ENCODE measurements at regions of chr5 and their contacts with region 1.

Region 1: GRCh38 chr5:157858527-157859226 is at the start of gene CLINT1:
- DNase-seq: peak; percentile 78 to 86 (median 84)
- ATAC-seq: peak; percentile 96
- H3K4me3 ChIP-seq: peak within 1 kb of the TSS; percentile 96
- H3K4me3 Mint-ChIP-seq: peak within 1 kb of the TSS; percentile 88 to 99 (median 96)
- H3K27ac ChIP-seq: peak within 1 kb of the TSS; percentile 85
- H3K27ac Mint-ChIP-seq: peak within 1 kb of the TSS; percentile 94 to 99 (median 96)
- H3K4me1 ChIP-seq: peaks cover 7 to 13% of the 10 kb centered on the region in 2 donors
- H3K4me1 Mint-ChIP-seq: peaks cover 51 to 83% (median 78%) of the 10 kb centered on the region in 7 donors
- H3K27me3 ChIP-seq: no peaks in the 10 kb centered on the region
- H3K27me3 Mint-ChIP-seq: no peaks in the 10 kb centered on the region
- total RNA-seq, gene CLINT1: 58.8 to 94.2 (median 74.0) TPM

Region 2: GRCh38 chr5:157540707-157541446 is 317.8 kb before region 1 on chr5:
- CTCF ChIA-PET with region 1: no interaction called
- POLR2A ChIA-PET with region 1: no interaction called
- intact Hi-C with region 1: loop called in 1 of 2 experiments (anchors 1 kb)
- DNase-seq: peak in 1 of 9 donors; percentile 57
- ATAC-seq: peak; percentile 51
- H3K4me3 ChIP-seq: peak overlapping the region; percentile 19
- H3K4me3 Mint-ChIP-seq: peak overlapping the region in 5 of 10 donors; percentile 7 to 81 (median 12)
- H3K27ac ChIP-seq: no peak overlapping the region
- H3K27ac Mint-ChIP-seq: peak overlapping the region in 7 of 9 donors; percentile 2 to 99 (median 45)
- H3K4me1 ChIP-seq: peaks cover 14 to 65% of the 10 kb centered on the region in 2 donors
- H3K4me1 Mint-ChIP-seq: peaks cover 12 to 92% (median 29%) of the 10 kb centered on the region in 7 donors
- H3K27me3 ChIP-seq: no peaks in the 10 kb centered on the region
- H3K27me3 Mint-ChIP-seq: no peaks in the 10 kb centered on the region

Region 3: GRCh38 chr5:157731272-157732129 is 127.2 kb before region 1 on chr5 and contains the start of gene THG1L:
- CTCF ChIA-PET with region 1: no interaction called
- POLR2A ChIA-PET with region 1: no interaction called
- intact Hi-C with region 1: loop called (anchors 1 kb)
- DNase-seq: peak; percentile 94 to 98 (median 96)
- ATAC-seq: peak; percentile 98
- H3K4me3 ChIP-seq: peak within 1 kb of the TSS; percentile 73
- H3K4me3 Mint-ChIP-seq: peak within 1 kb of the TSS; percentile 87 to 99 (median 97)
- H3K27ac ChIP-seq: peak within 1 kb of the TSS; percentile 73
- H3K27ac Mint-ChIP-seq: peak within 1 kb of the TSS; percentile 80 to 98 (median 93)
- H3K4me1 ChIP-seq: peaks cover 3 to 7% of the 10 kb centered on the region in 2 donors
- H3K4me1 Mint-ChIP-seq: peaks cover 9 to 26% (median 23%) of the 10 kb centered on the region in 7 donors
- H3K27me3 ChIP-seq: no peaks in the 10 kb centered on the region
- H3K27me3 Mint-ChIP-seq: no peaks in the 10 kb centered on the region
- total RNA-seq, gene THG1L: 6.2 to 17.4 (median 7.4) TPM

Region 4: GRCh38 chr5:157842787-157843186 is 15.9 kb before region 1 on chr5:
- CTCF ChIA-PET with region 1: interaction called, 4 read pairs
- POLR2A ChIA-PET with region 1: interaction called, 3 read pairs
- intact Hi-C with region 1: loop called (anchors 2 kb)
- DNase-seq: no peak
- ATAC-seq: no peak
- H3K4me3 ChIP-seq: no peak overlapping the region
- H3K4me3 Mint-ChIP-seq: no peak overlapping the region
- H3K27ac ChIP-seq: no peak overlapping the region
- H3K27ac Mint-ChIP-seq: peak overlapping the region in 1 of 9 donors; percentile 59
- H3K4me1 ChIP-seq: peaks cover 0 to 8% of the 10 kb centered on the region in 2 donors
- H3K4me1 Mint-ChIP-seq: peaks cover 9 to 45% (median 34%) of the 10 kb centered on the region in 7 donors
- H3K27me3 ChIP-seq: no peaks in the 10 kb centered on the region
- H3K27me3 Mint-ChIP-seq: no peaks in the 10 kb centered on the region

Region 5: GRCh38 chr5:157948738-157949410 is 90.2 kb after region 1 on chr5:
- CTCF ChIA-PET with region 1: interaction called, 5 read pairs
- POLR2A ChIA-PET with region 1: no interaction called
- intact Hi-C with region 1: loop called (anchors 1 kb)
- DNase-seq: peak; percentile 44 to 78 (median 69)
- ATAC-seq: peak; percentile 97
- H3K4me3 ChIP-seq: no peak overlapping the region
- H3K4me3 Mint-ChIP-seq: peak overlapping the region in 4 of 10 donors; percentile 1 to 44 (median 4)
- H3K27ac ChIP-seq: no peak overlapping the region
- H3K27ac Mint-ChIP-seq: no peak overlapping the region
- H3K4me1 ChIP-seq: no peaks in the 10 kb centered on the region
- H3K4me1 Mint-ChIP-seq: peaks cover 5 to 10% (median 6%) of the 10 kb centered on the region in 7 donors
- H3K27me3 ChIP-seq: no peaks in the 10 kb centered on the region
- H3K27me3 Mint-ChIP-seq: peaks cover 5 to 27% (median 9%) of the 10 kb centered on the region in 5 donors

Region 6: GRCh38 chr5:159120446-159120845 is 1261.8 kb after region 1 on chr5:
- CTCF ChIA-PET with region 1: no interaction called
- POLR2A ChIA-PET with region 1: no interaction called
- intact Hi-C with region 1: loop called (anchors 5 kb)
- DNase-seq: peak in 7 of 9 donors; percentile 41 to 80 (median 71)
- ATAC-seq: peak; percentile 84
- H3K4me3 ChIP-seq: peak overlapping the region; percentile 6
- H3K4me3 Mint-ChIP-seq: peak overlapping the region; percentile 48 to 88 (median 72)
- H3K27ac ChIP-seq: peak overlapping the region; percentile 22
- H3K27ac Mint-ChIP-seq: peak overlapping the region; percentile 86 to 96 (median 93)
- H3K4me1 ChIP-seq: peaks cover 7 to 17% of the 10 kb centered on the region in 2 donors
- H3K4me1 Mint-ChIP-seq: peaks cover 9 to 26% (median 22%) of the 10 kb centered on the region in 7 donors
- H3K27me3 ChIP-seq: no peaks in the 10 kb centered on the region
- H3K27me3 Mint-ChIP-seq: peaks cover 0 to 14% (median 0%) of the 10 kb centered on the region in 5 donors

Measured in naive thymus-derived CD4-positive, alpha-beta T cell (primary cell).